Psoas muscle (tissue), 8 donors: ENCODE measurements at regions of chr5 and their contacts with region 1.

Region 1: DNA sequence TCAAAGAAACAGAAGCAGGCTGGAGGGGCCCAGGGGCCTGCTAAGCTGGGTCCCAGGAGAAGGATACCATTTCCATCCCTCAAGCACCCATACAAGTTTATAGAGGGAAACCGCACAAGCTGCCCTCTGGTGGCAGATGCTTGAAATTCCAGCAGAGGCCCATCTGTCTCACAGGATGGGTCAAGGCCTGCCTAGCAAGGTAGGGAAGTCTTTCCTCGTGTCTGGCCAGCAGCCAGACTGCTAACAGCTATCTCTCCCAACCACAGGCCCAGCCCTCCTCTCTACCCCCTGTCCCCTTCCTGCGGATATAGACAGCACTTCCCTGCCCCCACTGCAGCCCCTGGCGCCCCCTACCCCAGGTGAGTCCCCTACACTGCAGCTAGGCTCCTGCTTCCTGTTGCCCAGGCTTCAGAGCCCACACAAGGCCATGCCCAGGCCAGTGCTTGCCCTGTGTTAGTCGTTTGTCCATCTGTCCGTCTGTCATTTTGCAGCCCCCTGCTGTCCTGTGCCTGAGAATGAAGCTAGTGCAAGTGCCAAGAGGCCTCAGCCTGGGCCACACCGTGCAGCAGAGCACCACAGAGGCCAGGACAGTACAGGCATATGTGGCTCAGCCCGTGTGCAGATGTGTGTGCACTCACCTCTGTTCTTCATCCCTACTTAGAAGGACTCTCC is 26.2 kb downstream of the TCF7 start:
- DNase-seq: peak; percentile 58 to 72
- ATAC-seq: peak; percentile 61 to 76 (median 74)
- H3K4me3 ChIP-seq: no peak overlapping the region
- H3K27ac ChIP-seq: no peak overlapping the region
- H3K4me1 ChIP-seq: peaks cover 17% of the 10 kb centered on the region
- H3K27me3 ChIP-seq: no peaks in the 10 kb centered on the region
- CTCF ChIP-seq: peak; percentile 72

Region 2: DNA sequence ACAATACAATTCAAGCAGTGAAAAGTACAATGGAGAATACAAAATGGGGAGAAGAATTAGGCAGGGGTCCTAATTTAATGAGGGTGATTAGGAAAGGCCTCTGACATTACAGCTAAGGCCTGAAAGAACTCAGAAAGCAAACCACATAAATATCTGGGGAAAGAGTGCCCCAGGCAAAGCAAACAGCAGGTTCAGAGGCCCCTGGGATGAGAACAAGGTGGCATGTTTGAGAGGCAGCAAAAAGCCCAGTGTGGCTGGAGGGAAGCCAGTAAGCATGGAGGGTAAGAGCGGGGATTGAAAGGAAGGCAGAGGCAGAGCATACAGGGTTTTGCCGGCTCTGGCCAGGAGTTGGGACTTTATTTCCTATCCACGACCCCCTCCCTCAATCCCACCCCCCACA is 102.5 kb before region 1 on chr5:
- intact Hi-C with region 1: loop called (anchors 2 kb)
- DNase-seq: no peak
- ATAC-seq: no peak
- H3K4me3 ChIP-seq: no peak overlapping the region
- H3K27ac ChIP-seq: no peak overlapping the region
- H3K4me1 ChIP-seq: no peaks in the 10 kb centered on the region
- H3K27me3 ChIP-seq: no peaks in the 10 kb centered on the region
- CTCF ChIP-seq: no peak

Region 3: GRCh38 chr5:134101686-134102439 is 38.8 kb before region 1 on chr5:
- intact Hi-C with region 1: loop called (anchors 5 kb)
- DNase-seq: peak; percentile 68 to 84
- ATAC-seq: peak; percentile 85 to 97 (median 88)
- H3K4me3 ChIP-seq: no peak overlapping the region
- H3K27ac ChIP-seq: no peak overlapping the region
- H3K4me1 ChIP-seq: no peaks in the 10 kb centered on the region
- H3K27me3 ChIP-seq: no peaks in the 10 kb centered on the region
- CTCF ChIP-seq: peak; percentile 87